Ovary (tissue), 10 donors: ENCODE measurements at regions of chr9 and their contacts with region 1.

Region 1: DNA sequence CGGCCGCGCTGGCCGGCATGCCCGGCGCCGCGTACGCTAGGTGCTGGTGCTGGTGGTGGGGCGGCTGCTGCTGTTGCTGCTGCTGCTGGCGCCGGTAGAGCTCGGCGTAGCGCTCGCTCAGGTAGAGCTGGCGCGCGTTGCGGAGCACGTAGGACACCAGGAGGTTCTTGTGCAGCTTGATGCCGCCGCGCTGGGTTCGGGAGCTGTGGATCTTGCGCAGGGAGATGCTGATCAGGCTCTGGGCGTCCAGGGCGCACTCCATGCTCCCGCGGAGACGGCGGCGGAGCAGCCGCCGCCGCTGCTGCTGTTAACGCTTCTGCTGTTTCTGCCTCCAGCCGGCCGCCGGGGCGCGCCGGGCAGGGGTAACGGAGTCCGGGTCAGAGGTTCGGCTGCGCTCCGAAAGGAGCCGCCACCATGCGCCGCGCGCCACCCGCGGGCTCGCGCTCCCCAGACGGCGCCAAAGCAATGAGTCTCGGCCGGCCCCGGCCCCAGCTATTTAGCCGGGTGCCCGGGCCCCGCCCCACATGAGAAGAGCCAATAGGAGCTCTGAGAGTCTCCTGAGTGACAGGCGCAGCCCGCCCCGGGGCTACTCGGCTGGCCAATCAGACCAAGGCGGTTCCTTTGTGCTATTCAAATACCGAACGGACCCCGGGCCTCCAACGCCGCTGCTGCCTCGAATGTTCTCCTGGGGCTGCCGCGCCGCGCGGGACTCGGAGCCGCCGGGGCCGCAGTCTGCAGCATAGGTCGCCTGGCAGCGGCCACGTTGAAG is at the start of gene IER5L:
- DNase-seq: peak; percentile 96 to 98 (median 98)
- H3K4me3 ChIP-seq: peak within 1 kb of the TSS; percentile 52
- H3K27ac ChIP-seq: peak within 1 kb of the TSS; percentile 97 to 99
- H3K4me1 ChIP-seq: peaks cover 8% of the 10 kb centered on the region
- H3K27me3 ChIP-seq: no peaks in the 10 kb centered on the region
- CTCF ChIP-seq: peak in 1 of 3 donors; percentile 25
- EP300 ChIP-seq: no peak
- POLR2A ChIP-seq: peak; percentile 95
- total RNA-seq, gene IER5L: 15.4 to 74.3 (median 45.0) TPM

Region 2: GRCh38 chr9:128845155-128845931 is 332.6 kb before region 1 on chr9:
- intact Hi-C with region 1: no loop called
- DNase-seq: no peak
- H3K4me3 ChIP-seq: no peak overlapping the region
- H3K27ac ChIP-seq: no peak overlapping the region
- H3K4me1 ChIP-seq: no peaks in the 10 kb centered on the region
- H3K27me3 ChIP-seq: no peaks in the 10 kb centered on the region
- CTCF ChIP-seq: no peak
- EP300 ChIP-seq: no peak
- POLR2A ChIP-seq: no peak

Region 3: DNA sequence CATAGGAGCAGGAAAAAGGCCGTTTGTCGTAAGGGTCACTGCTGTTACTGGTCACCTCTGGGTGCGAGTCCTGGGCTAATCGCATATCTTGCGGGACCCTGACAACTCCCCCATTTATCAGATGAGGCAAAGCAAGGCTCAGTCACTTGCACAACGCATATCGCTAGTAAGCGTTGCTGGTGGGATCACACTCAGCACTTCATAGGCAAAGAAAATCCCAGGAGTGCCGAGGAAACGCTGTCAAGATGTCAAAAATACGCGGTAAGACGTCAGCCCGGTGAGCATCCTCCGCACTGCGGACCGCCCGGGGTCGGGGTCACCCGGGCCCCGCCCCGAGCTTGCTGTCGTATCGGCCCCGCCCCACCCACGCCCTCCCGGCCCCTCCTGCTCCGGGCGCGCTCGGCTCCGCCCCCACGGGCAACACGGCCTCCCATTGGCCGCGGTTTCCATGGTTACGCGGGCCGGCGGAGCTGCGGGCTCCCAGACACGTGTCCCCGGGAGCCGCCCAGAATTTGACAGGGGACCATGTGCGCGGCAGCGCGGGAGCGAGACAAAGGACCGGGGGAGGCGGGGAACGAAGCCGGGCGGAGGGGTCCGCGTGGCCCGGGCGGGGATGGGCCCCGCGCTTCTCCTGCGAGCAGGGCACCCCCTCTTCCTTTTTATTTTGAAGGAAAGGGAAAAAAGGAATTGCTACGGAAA is 80.3 kb after region 1 on chr9:
- intact Hi-C with region 1: loop called in 3 of 4 experiments (anchors 5 kb)
- DNase-seq: peak; percentile 96 to 98 (median 98)
- H3K4me3 ChIP-seq: peak overlapping the region; percentile 31
- H3K27ac ChIP-seq: peak overlapping the region in 1 of 2 donors; percentile 95
- H3K4me1 ChIP-seq: peaks cover 19% of the 10 kb centered on the region
- H3K27me3 ChIP-seq: no peaks in the 10 kb centered on the region
- CTCF ChIP-seq: peak in 1 of 3 donors; percentile 13
- EP300 ChIP-seq: peak; percentile 72
- POLR2A ChIP-seq: no peak

Region 4: GRCh38 chr9:129401628-129402370 is 223.8 kb after region 1 on chr9:
- intact Hi-C with region 1: loop called in 1 of 4 experiments (anchors 5 kb)
- DNase-seq: peak; percentile 50 to 71 (median 57)
- H3K4me3 ChIP-seq: no peak overlapping the region
- H3K27ac ChIP-seq: peak overlapping the region; percentile 52 to 85
- H3K4me1 ChIP-seq: peaks cover 16% of the 10 kb centered on the region
- H3K27me3 ChIP-seq: no peaks in the 10 kb centered on the region
- CTCF ChIP-seq: no peak
- EP300 ChIP-seq: no peak
- POLR2A ChIP-seq: no peak

Region 5: GRCh38 chr9:129451089-129452025 is 273.4 kb after region 1 on chr9:
- intact Hi-C with region 1: no loop called
- DNase-seq: peak; percentile 75 to 81 (median 78)
- H3K4me3 ChIP-seq: no peak overlapping the region
- H3K27ac ChIP-seq: peak overlapping the region; percentile 95 to 98
- H3K4me1 ChIP-seq: peaks cover 14% of the 10 kb centered on the region
- H3K27me3 ChIP-seq: no peaks in the 10 kb centered on the region
- CTCF ChIP-seq: no peak
- EP300 ChIP-seq: no peak
- POLR2A ChIP-seq: no peak

Region 6: DNA sequence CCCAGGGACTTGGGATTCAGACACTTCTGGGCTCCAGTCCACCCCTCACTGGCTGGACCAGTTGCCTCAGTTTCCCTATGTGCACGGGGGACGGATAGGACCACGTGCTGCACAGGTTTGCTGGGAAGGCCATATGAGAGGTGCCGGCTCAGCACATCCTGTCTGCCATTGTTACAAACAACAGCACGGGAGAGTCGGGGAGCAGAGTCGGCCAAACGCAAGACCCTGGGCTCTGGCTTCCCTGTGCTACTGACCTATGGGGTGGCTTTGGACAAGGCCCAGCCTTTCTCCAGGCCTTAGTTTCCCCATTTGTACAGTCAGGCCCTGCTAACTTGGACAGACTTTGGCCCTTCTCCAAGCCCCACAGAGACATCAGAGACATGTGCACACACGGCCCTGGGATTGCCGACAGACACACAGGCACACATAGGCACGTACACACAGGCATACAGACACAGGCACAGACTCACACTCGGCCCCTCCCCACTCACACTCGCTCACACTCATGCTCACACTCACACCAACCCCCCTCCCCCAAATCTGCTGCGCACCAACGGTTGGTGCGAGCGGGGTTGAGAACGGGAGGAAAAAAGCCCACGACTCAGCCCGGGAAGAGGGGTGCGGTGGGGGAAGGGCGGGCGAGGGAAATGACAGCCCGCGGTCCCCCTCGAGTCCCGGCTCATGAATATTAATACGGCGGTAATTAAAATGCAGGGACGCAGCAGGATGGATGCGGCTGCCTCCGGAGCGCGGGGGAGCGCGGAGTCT is 309.9 kb after region 1 on chr9:
- intact Hi-C with region 1: loop called (anchors 5 kb)
- DNase-seq: peak in 4 of 5 donors; percentile 69 to 80 (median 76)
- H3K4me3 ChIP-seq: peak overlapping the region; percentile 53
- H3K27ac ChIP-seq: peak overlapping the region; percentile 96 to 100
- H3K4me1 ChIP-seq: peaks cover 34% of the 10 kb centered on the region
- H3K27me3 ChIP-seq: no peaks in the 10 kb centered on the region
- CTCF ChIP-seq: no peak
- EP300 ChIP-seq: no peak
- POLR2A ChIP-seq: no peak